Right lobe of liver (tissue), 6 donors: ENCODE measurements at regions of chr4 and their contacts with region 1.

Region 1: DNA sequence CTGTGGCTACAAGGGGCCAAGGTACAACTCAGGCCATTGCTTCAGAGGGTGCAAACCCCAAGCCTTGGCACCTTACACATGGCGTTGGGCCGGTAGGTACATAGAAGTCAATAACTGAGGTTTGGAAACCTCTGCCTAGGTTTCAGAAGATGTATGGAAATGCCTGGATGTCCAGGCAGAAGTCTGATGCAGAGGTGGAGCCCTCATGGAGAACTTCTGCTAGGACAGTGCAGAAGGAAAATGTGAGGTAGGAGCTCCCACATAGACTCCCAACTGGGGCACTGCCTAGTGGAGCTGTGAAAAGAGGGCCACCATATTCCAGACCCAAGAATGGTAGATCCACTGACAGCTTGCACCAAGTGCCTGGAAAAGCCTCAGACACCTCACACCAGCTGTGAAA is 92.1 kb upstream of the SFRP2 start:
- DNase-seq: no peak
- ATAC-seq: no peak
- H3K4me3 ChIP-seq: no peak overlapping the region
- H3K27ac ChIP-seq: no peak overlapping the region
- H3K4me1 ChIP-seq: no peaks in the 10 kb centered on the region
- H3K27me3 ChIP-seq: no peaks in the 10 kb centered on the region
- CTCF ChIP-seq: no peak
- POLR2A ChIP-seq: no peak

Region 2: GRCh38 chr4:153579872-153580271 is 301.1 kb before region 1 on chr4:
- intact Hi-C with region 1: no loop called
- DNase-seq: no peak
- ATAC-seq: no peak
- H3K4me3 ChIP-seq: no peak overlapping the region
- H3K27ac ChIP-seq: no peak overlapping the region
- H3K4me1 ChIP-seq: peaks cover 0 to 28% (median 4%) of the 10 kb centered on the region in 4 donors
- H3K27me3 ChIP-seq: no peaks in the 10 kb centered on the region
- CTCF ChIP-seq: no peak
- POLR2A ChIP-seq: no peak

Region 3: GRCh38 chr4:153850533-153851280 is 30.3 kb before region 1 on chr4:
- intact Hi-C with region 1: loop called in 1 of 2 experiments (anchors 5 kb)
- DNase-seq: no peak
- ATAC-seq: no peak
- H3K4me3 ChIP-seq: no peak overlapping the region
- H3K27ac ChIP-seq: no peak overlapping the region
- H3K4me1 ChIP-seq: no peaks in the 10 kb centered on the region
- H3K27me3 ChIP-seq: no peaks in the 10 kb centered on the region
- CTCF ChIP-seq: no peak
- POLR2A ChIP-seq: no peak